ENCODE measurements at regions of chr12 and their contacts with region 1.

Region 1: GRCh38 chr12:45409966-45410365 is 194.1 kb downstream of the ANO6 start:
- DNase-seq: peak; percentile 42 to 68
- ATAC-seq: peak; percentile 71 to 78
- H3K4me3 ChIP-seq: no peak overlapping the region
- H3K27ac ChIP-seq: peak overlapping the region; percentile 75 to 84 (median 82)
- H3K4me1 ChIP-seq: peaks cover 32 to 36% of the 10 kb centered on the region in 2 donors
- H3K27me3 ChIP-seq: no peaks in the 10 kb centered on the region
- CTCF ChIP-seq: no peak
- POLR2A ChIP-seq: no peak

Region 2: DNA sequence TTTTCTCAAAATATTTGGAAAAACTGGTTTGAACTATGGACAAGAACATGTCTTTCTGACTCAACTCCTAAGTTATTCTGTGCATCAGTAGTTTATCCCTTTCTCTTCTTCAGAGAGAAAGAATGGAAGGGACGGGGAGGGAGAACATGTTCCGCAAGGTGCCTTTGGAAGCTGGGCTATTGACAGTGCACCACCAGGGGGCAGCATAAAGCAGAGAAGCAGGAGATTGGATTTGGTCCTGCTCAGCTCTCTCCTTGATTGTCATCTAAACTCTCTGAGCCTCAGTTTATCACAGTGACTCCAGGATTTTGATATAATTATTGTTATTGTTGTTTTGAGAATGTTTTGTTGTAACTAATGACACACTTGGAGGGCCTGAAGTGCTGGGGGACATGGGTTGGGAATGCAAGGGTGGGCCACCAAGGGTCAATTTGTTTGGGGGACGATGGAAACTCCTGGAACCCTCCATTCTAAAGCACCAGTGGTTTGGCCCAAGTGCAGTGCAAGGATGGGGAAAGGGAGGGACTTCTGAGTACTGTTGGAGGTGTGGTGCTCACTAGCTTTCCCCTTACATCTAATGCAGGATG is 239.4 kb before region 1 on chr12:
- in situ Hi-C with region 1: no loop called
- intact Hi-C with region 1: loop called (anchors 5 kb)
- DNase-seq: peak; percentile 56 to 74
- ATAC-seq: peak; percentile 75 to 92
- H3K4me3 ChIP-seq: no peak overlapping the region
- H3K27ac ChIP-seq: no peak overlapping the region
- H3K4me1 ChIP-seq: peaks cover 19 to 25% of the 10 kb centered on the region in 2 donors
- H3K27me3 ChIP-seq: no peaks in the 10 kb centered on the region
- CTCF ChIP-seq: peak; percentile 72 to 91 (median 79)
- POLR2A ChIP-seq: no peak

Region 3: GRCh38 chr12:45290204-45290580 is 119.8 kb before region 1 on chr12:
- in situ Hi-C with region 1: no loop called
- intact Hi-C with region 1: loop called (anchors 5 kb)
- DNase-seq: peak; percentile 48 to 65
- ATAC-seq: peak; percentile 93
- H3K4me3 ChIP-seq: peak overlapping the region in 3 of 4 donors; percentile 13 to 27 (median 21)
- H3K27ac ChIP-seq: peak overlapping the region; percentile 89 to 93 (median 90)
- H3K4me1 ChIP-seq: peaks cover 39 to 40% of the 10 kb centered on the region in 2 donors
- H3K27me3 ChIP-seq: no peaks in the 10 kb centered on the region
- CTCF ChIP-seq: no peak
- POLR2A ChIP-seq: no peak

Region 4: DNA sequence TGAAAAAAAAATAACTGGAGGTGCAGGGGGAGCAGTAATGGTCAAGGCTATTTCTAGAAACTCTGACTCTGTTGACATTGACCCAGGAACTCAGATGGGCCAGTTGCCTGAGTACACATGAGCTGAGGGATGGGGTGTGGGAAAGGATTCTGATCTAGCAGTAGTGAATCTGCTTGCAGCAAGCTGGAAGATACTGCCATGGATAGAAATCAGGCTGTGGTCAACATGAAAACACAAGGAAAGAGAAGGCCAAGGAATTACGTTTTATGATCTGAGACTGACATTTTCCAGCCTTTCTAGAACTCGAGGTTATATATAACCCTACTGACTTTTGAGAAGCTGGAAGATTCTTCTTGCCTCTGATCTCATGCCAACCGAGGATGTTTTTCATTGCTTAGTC is 104.1 kb before region 1 on chr12:
- in situ Hi-C with region 1: no loop called
- intact Hi-C with region 1: no loop called
- DNase-seq: peak; percentile 54 to 58
- ATAC-seq: peak; percentile 79 to 84
- H3K4me3 ChIP-seq: no peak overlapping the region
- H3K27ac ChIP-seq: peak overlapping the region; percentile 68 to 93 (median 90)
- H3K4me1 ChIP-seq: peaks cover 90 to 93% of the 10 kb centered on the region in 2 donors
- H3K27me3 ChIP-seq: no peaks in the 10 kb centered on the region
- CTCF ChIP-seq: no peak
- POLR2A ChIP-seq: no peak

Region 5: DNA sequence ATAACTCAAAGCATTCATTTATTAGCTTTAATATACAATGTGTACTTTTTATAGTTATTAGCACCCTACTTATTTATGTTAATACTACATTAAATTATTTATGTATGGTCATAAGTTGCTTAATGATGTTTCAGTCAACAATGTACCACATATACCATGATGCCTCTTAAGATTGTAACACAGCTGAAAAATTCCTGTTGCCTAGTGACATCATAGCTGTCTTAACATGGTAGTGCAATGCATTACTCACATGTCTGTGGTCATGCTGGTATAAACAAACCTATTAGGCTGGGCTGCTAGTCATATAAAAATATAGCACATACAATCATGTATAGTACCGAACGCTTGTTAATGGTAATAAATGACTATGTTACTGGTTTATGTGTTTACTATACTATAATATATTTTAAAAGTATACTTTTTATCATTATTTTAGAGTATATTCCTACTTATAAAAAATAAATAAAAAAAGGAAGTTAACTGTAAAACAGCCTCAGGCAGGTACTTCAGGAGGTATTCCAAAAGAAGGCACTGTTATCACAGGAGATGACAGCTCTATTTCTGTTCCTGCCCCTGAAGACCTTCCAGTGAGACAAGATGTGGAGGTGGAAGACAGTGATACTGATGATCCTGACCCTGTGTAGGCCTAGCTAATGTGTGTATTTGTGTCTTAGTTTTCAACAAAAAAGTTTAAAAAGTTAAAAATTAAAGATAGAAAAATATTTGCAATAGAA is 73.5 kb before region 1 on chr12:
- in situ Hi-C with region 1: no loop called
- intact Hi-C with region 1: loop called (anchors 5 kb)
- DNase-seq: no peak
- ATAC-seq: peak; percentile 49 to 54
- H3K4me3 ChIP-seq: no peak overlapping the region
- H3K27ac ChIP-seq: peak overlapping the region; percentile 63 to 80 (median 74)
- H3K4me1 ChIP-seq: peaks cover 27 to 28% of the 10 kb centered on the region in 2 donors
- H3K27me3 ChIP-seq: no peaks in the 10 kb centered on the region
- CTCF ChIP-seq: no peak
- POLR2A ChIP-seq: no peak

Measured in gastrocnemius medialis (tissue), 4 donors.